Mammary epithelial cell (primary cell): ENCODE measurements at regions of chr1 and their contacts with region 1.

Region 1: GRCh38 chr1:77468257-77468948 is 186.6 kb downstream of the AK5 start:
- DNase-seq: no peak
- H3K4me3 ChIP-seq: no peak overlapping the region
- H3K27ac ChIP-seq: no peak overlapping the region
- H3K4me1 ChIP-seq: no peaks in the 10 kb centered on the region
- H3K27me3 ChIP-seq: no peaks in the 10 kb centered on the region
- CTCF ChIP-seq: no peak

Region 2: GRCh38 chr1:77322061-77322900 is 146.1 kb before region 1 on chr1:
- CTCF ChIA-PET with region 1: no interaction called
- dilution Hi-C with region 1: no loop called
- in situ Hi-C with region 1: no loop called
- intact Hi-C with region 1: no loop called
- DNase-seq: peak; percentile 94
- H3K4me3 ChIP-seq: no peak overlapping the region
- H3K27ac ChIP-seq: peak overlapping the region; percentile 65
- H3K4me1 ChIP-seq: peaks cover 16% of the 10 kb centered on the region
- H3K27me3 ChIP-seq: no peaks in the 10 kb centered on the region
- CTCF ChIP-seq: no peak

Region 3: DNA sequence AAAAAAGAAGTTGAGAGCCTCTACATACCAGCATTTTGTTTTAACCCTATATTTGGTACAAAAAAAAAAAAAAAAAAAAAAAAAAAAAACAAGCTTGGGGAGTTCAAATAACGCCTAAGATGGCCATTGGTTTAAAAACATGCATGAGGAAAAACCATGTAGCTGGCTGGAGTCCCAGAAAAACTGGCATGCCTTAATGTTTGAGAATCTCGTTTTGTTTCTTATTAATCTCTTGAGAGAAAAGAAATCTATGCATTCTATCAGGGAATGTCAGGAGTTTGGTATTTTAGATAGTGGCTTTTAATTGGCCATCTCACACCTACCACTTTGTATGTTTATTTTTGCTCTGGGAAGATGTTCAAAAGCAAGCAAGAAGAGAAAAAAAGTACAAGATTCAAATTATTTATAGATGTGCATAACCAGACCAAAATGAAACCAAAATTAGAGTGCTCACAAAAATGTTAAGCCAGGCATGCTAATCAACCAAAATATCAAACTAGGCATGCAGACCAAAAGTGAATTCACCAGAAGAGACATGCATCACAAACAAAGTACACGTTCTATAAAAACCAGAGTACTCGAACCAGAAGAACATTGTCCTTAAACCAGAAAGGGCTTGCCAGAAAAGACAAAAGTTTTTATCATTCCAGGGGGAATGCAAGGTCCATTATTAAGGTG is 30.0 kb before region 1 on chr1:
- CTCF ChIA-PET with region 1: interaction called, 10 read pairs
- dilution Hi-C with region 1: no loop called
- in situ Hi-C with region 1: no loop called
- intact Hi-C with region 1: no loop called
- DNase-seq: no peak
- H3K4me3 ChIP-seq: no peak overlapping the region
- H3K27ac ChIP-seq: no peak overlapping the region
- H3K4me1 ChIP-seq: no peaks in the 10 kb centered on the region
- H3K27me3 ChIP-seq: no peaks in the 10 kb centered on the region
- CTCF ChIP-seq: no peak